ENCODE measurements at regions of chr12 and their contacts with region 1.

Region 1: GRCh38 chr12:80763874-80764273 is 47.2 kb downstream of the MYF5 start:
- DNase-seq: no peak
- ATAC-seq: peak; percentile 21; the same call in 2 of the 3 replicates
- H3K4me3 ChIP-seq: no peak overlapping the region
- H3K27ac ChIP-seq: no peak overlapping the region
- H3K4me1 ChIP-seq: no peaks in the 10 kb centered on the region
- H3K27me3 ChIP-seq: no peaks in the 10 kb centered on the region
- CTCF ChIP-seq: peak; percentile 36 to 51 (median 50); a peak in 5 of 6 replicates
- EP300 ChIP-seq: no peak
- POLR2A ChIP-seq: no peak
- RAD21 ChIP-seq: peak; percentile 86

Region 2: DNA sequence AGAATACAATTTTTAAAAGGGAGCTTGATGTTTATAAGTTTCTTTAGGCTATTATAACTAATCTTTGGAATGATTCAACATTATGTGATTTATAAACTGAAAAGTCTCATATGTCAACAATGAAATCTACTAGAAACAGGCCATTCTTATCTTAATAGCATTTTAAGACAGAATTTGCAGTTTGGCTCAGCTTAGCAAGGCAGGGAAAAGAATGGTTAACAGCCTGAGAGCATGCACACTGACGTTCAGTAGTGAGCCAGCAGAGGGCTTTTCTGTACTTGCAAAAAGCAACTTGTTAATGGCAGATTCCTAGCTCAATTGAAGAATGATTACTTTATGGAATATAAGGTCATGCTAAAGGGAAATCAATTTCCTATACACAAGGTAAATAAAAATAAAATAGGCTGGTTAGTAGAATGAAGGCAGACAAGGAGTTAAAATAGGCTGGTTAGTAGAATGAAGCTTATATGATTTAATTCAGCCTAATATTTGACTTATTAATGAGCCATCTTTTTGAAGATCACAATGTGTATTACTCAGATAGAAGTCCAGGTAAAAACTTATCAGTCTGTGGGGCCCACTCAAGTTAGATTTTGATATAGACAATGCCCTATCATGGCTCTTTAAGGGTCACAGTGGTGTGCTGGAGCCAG is 568.7 kb before region 1 on chr12:
- CTCF ChIA-PET with region 1: no interaction called
- POLR2A ChIA-PET with region 1: no interaction called
- RAD21 ChIA-PET with region 1: no interaction called
- SMC1A ChIA-PET with region 1: interaction called, 4 read pairs
- in situ Hi-C with region 1: no loop called
- intact Hi-C with region 1: loop called (anchors 10 kb)
- DNase-seq: no peak
- ATAC-seq: peak; percentile 87
- H3K4me3 ChIP-seq: no peak overlapping the region
- H3K27ac ChIP-seq: no peak overlapping the region
- H3K4me1 ChIP-seq: peaks cover 3% of the 10 kb centered on the region; the same call in 1 of the 2 replicates
- H3K27me3 ChIP-seq: no peaks in the 10 kb centered on the region; a peak in 1 of 4 replicates
- CTCF ChIP-seq: peak; percentile 35 to 61 (median 44); a peak in 4 of 6 replicates
- EP300 ChIP-seq: no peak
- POLR2A ChIP-seq: no peak
- RAD21 ChIP-seq: peak; percentile 55

Region 3: DNA sequence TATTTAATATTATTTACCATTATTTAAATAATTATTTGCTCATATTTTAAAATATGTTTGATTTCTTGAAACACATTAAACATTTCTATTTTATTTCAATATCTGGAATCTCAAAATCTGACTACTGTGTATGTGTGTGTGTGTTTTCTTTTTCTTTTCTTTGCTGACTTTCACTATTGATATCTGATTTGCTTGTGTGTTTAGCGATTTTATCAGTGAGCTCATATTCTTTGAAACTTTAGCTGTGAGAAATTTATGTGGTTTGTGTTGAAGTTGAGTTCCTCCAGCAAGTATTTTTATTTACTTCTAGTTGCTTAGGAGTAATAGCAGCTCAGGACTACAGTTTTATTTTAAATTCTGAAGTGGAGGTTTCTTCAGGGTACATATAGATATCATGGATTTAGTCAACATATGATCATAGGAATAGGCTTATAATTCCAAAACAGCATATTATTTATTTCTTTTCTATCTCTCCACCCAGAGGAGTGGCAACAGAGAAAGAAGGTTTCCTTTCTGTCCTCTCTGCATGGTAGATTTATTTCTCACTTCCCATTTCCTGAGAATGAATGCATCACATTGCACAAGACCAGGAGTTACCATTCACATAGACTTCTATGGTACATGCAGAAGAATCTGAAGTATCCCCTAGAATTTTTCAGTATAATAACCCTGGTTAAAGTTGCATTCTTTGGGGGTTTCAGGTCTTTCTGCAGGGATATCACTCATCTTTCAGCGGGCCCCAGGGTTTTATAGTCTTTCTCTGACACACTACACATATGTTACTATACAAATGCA is 259.3 kb before region 1 on chr12:
- CTCF ChIA-PET with region 1: no interaction called
- POLR2A ChIA-PET with region 1: no interaction called
- RAD21 ChIA-PET with region 1: no interaction called
- SMC1A ChIA-PET with region 1: no interaction called
- in situ Hi-C with region 1: no loop called
- intact Hi-C with region 1: no loop called
- DNase-seq: no peak
- ATAC-seq: peak; percentile 64
- H3K4me3 ChIP-seq: no peak overlapping the region
- H3K27ac ChIP-seq: no peak overlapping the region
- H3K4me1 ChIP-seq: no peaks in the 10 kb centered on the region
- H3K27me3 ChIP-seq: no peaks in the 10 kb centered on the region
- CTCF ChIP-seq: no peak
- EP300 ChIP-seq: no peak
- POLR2A ChIP-seq: no peak
- RAD21 ChIP-seq: no peak

Region 4: GRCh38 chr12:80807640-80808288 is 43.9 kb after region 1 on chr12:
- CTCF ChIA-PET with region 1: no interaction called
- POLR2A ChIA-PET with region 1: no interaction called
- RAD21 ChIA-PET with region 1: no interaction called
- SMC1A ChIA-PET with region 1: interaction called, 3 read pairs
- in situ Hi-C with region 1: no loop called
- intact Hi-C with region 1: loop called (anchors 5 kb)
- DNase-seq: peak; percentile 59
- ATAC-seq: peak; percentile 95
- H3K4me3 ChIP-seq: no peak overlapping the region
- H3K27ac ChIP-seq: no peak overlapping the region
- H3K4me1 ChIP-seq: peaks cover 23% of the 10 kb centered on the region
- H3K27me3 ChIP-seq: no peaks in the 10 kb centered on the region
- CTCF ChIP-seq: no peak
- EP300 ChIP-seq: peak in 1 of 2 experiments; percentile 39; a peak in 1 of 4 replicates
- POLR2A ChIP-seq: no peak
- RAD21 ChIP-seq: no peak

Region 5: GRCh38 chr12:80936498-80937390 is 172.9 kb after region 1 on chr12:
- CTCF ChIA-PET with region 1: no interaction called
- POLR2A ChIA-PET with region 1: no interaction called
- RAD21 ChIA-PET with region 1: no interaction called
- SMC1A ChIA-PET with region 1: no interaction called
- in situ Hi-C with region 1: no loop called
- intact Hi-C with region 1: loop called (anchors 5 kb)
- DNase-seq: no peak
- ATAC-seq: peak; percentile 80
- H3K4me3 ChIP-seq: peak overlapping the region; percentile 53
- H3K27ac ChIP-seq: no peak overlapping the region
- H3K4me1 ChIP-seq: no peaks in the 10 kb centered on the region
- H3K27me3 ChIP-seq: peaks cover 7 to 10% of the 10 kb centered on the region in 2 experiments; a peak in 3 of 4 replicates
- CTCF ChIP-seq: no peak
- EP300 ChIP-seq: no peak
- POLR2A ChIP-seq: no peak
- RAD21 ChIP-seq: no peak

Measured in GM12878 (cell line).